Head of caudate nucleus (tissue), 42 donors: ENCODE measurements at regions of chr11 and their contacts with region 1.

Region 1: DNA sequence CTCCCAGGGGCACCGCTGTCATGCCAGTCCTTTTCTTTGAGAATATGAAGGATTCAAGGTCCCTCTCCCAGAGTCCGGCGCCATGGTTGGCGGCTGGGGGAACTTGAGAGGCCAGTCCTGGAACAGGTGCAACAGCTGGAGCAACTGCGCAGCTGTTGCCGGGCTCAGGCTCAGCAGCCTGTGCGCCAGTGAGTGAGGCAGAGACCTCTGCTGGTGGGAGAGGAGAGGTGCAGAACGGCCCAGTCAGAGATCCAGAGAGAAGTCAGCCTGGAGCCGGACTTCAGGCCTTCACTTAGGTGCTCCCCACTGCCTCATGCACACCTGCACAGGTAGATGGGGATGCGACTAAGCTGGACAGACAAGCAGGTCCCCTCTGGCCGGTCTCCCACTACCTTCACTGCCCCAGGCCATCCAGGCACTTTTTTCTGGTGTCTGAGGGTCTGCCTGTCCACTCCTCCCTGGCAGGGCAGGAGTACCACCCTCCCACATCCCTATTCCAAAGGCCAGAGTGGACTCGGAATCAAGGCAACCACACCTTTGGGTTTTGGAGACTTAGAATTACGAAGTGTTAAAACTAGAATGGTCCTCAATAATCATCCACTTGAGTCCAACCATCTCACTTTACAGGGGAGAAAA is 4.6 kb downstream of the CHRDL2 start:
- DNase-seq: peak; percentile 30 to 90 (median 80)

Region 2: DNA sequence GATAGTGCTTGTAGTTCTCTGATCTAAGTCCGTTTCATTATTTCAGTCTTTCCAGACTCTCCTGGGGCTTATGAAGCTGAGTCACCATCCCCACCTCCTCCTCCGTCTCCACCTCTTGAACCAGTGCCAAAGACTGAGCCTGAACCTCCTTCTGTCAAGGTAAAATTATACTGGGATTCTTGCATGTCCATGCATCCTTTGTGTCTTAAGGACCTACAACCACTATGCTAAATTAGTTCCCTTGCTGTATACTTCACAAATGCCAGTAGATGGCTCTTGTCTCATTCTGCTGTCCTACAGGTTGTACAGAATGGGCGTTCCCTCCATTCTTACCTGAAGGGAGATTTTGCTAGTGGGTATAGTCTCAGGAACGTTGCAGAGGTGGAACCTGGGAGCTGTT is 92.1 kb before region 1 on chr11:
- intact Hi-C with region 1: loop called (anchors 10 kb)
- DNase-seq: peak in 27 of 42 donors; percentile 8 to 68 (median 34)

Region 3: GRCh38 chr11:74849525-74850391 is 123.1 kb after region 1 on chr11:
- intact Hi-C with region 1: no loop called
- DNase-seq: no peak

Region 4: GRCh38 chr11:75031771-75032549 is 305.3 kb after region 1 on chr11:
- intact Hi-C with region 1: no loop called
- DNase-seq: peak; percentile 57 to 94 (median 80)